SK-N-SH (cell line): ENCODE measurements at regions of chr19 and their contacts with region 1.

Region 1: DNA sequence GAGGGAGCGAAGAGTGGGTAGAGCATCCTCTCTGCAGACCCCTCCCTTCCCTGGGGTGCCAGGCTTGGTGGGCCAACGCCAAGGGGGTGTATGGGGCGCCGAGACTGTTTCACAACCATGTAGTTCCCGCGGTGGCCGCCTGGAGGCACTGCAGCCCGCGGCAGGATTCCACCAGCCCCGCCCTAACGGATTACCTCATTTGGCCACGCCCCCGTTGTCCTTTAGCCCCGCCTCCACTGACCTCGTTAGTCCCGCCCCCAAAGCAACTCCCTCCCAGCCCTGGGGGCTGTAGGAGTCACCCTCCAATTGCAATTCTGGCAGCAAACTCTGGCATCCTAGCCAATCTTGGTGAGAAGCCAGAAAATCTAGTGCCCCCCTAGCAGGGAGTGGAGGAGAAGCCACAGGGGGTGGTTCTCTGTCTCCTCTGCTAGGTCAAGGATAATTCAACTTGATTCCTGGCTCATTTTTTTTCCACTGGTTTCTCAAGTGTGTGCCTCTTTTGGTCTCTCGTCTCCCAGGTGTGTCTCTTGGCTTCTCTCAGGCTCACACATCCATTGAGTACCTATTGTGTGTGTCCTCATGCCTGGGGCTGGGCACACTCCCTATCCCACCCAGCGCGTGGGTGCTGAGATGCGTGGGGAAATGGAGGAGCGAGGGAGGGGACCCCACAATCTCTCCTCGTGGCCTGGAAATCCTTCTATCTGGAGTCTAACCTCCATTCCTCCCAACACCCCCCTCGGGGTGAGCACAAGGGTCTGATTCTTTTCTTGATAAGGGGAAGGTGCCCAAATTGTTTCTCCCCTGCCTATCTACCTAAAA is 2.0 kb downstream of the OLFM2 start:
- DNase-seq: peak; percentile 92
- H3K4me3 ChIP-seq: peak overlapping the region in 1 of 2 experiments; percentile 30; a peak in 2 of 4 replicates
- H3K27ac ChIP-seq: no peak overlapping the region
- H3K4me1 ChIP-seq: peaks cover 5 to 17% of the 10 kb centered on the region in 2 experiments; a peak in 3 of 4 replicates
- H3K27me3 ChIP-seq: peaks cover 23% of the 10 kb centered on the region; the same call in 1 of the 2 replicates
- CTCF ChIP-seq: peak; percentile 95
- EP300 ChIP-seq: no peak
- RAD21 ChIP-seq: peak; percentile 86

Region 2: GRCh38 chr19:9914315-9915207 is 19.8 kb before region 1 on chr19:
- CTCF ChIA-PET with region 1: interaction called, 14 read pairs
- POLR2A ChIA-PET with region 1: no interaction called
- DNase-seq: peak; percentile 92
- H3K4me3 ChIP-seq: peak overlapping the region; percentile 52 to 72
- H3K27ac ChIP-seq: peak overlapping the region; percentile 41 to 54; a peak in 3 of 4 replicates
- H3K4me1 ChIP-seq: peaks cover 0 to 10% of the 10 kb centered on the region in 2 experiments; a peak in 1 of 4 replicates
- H3K27me3 ChIP-seq: no peaks in the 10 kb centered on the region
- CTCF ChIP-seq: peak; percentile 64
- EP300 ChIP-seq: peak in 1 of 2 experiments; percentile 37; a peak in 2 of 4 replicates
- RAD21 ChIP-seq: peak; percentile 61